HAP-1 (cell line): ENCODE measurements at regions of chr16 and their contacts with region 1.

Region 1: DNA sequence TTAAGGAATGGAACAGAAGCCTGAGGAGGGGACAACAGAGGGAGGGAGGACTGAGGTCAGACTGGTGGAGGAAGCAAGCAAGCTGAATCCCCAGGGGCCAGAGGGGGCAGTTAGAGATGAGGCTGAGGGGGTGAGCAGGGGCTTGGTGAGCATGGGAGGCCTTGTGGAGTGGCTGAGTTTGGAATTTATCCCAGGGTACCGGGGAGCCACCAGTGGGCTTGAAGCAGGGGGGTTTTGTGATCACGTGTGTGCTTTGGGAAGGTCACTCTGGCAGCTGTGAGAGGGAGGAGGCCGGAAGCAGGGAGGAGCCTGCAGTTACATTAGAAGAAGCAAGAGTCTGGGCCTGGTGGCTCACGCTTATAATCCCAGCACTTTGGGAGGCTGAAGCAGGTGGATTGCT is 9.8 kb upstream of the CTCF start:
- DNase-seq: no peak
- H3K4me3 ChIP-seq: no peak overlapping the region
- H3K4me1 ChIP-seq: no peaks in the 10 kb centered on the region
- H3K27me3 ChIP-seq: no peaks in the 10 kb centered on the region

Region 2: GRCh38 chr16:66580605-66581209 is 971.8 kb before region 1 on chr16:
- in situ Hi-C with region 1: no loop called
- DNase-seq: peak; percentile 25 to 66
- H3K4me3 ChIP-seq: no peak overlapping the region
- H3K4me1 ChIP-seq: peaks cover 9% of the 10 kb centered on the region
- H3K27me3 ChIP-seq: no peaks in the 10 kb centered on the region

Region 3: DNA sequence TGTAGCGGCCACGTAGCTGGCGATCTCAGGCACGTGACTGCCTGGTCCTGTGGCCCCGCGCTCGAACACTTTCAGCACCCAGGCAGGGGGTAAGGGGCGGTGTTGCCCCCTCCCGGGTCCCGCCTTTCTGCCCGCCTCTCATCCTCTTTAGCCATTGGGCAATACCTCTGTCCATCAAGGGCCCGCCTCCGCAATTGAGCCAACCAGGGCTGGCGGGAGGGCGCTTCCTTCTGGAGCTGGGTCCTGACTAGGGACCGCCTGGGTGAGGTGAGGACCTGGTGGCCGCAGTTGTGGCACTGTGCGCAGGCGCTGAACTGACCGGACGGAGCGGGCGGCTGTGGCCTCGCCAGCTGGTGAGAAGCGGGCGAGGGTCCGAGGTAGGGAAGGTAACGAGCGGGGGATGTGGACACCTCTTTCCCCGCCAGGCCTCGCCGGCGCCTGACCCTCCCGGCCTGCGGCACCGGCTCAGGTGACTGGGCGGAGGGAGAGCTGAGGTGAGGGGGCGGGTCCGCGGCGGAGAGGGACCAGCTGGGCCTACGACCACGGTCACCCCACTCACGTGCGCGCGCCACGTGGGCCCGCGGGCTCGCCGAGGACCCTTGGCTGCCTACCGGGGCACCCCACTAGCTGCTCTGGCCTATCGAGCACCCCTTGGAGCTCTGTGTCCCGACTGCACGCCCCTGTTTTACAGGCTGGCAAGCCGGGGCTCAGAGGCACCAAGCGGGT is 672.0 kb before region 1 on chr16 and contains the start of gene PDP2:
- in situ Hi-C with region 1: no loop called
- DNase-seq: peak; percentile 93 to 98
- H3K4me3 ChIP-seq: peak within 1 kb of the TSS; percentile 88
- H3K4me1 ChIP-seq: peaks cover 12% of the 10 kb centered on the region
- H3K27me3 ChIP-seq: no peaks in the 10 kb centered on the region

Region 4: GRCh38 chr16:67150833-67151396 is 401.6 kb before region 1 on chr16 and contains the start of gene B3GNT9:
- in situ Hi-C with region 1: no loop called
- DNase-seq: no peak
- H3K4me3 ChIP-seq: no peak within 1 kb of the TSS
- H3K4me1 ChIP-seq: no peaks in the 10 kb centered on the region
- H3K27me3 ChIP-seq: no peaks in the 10 kb centered on the region

Region 5: DNA sequence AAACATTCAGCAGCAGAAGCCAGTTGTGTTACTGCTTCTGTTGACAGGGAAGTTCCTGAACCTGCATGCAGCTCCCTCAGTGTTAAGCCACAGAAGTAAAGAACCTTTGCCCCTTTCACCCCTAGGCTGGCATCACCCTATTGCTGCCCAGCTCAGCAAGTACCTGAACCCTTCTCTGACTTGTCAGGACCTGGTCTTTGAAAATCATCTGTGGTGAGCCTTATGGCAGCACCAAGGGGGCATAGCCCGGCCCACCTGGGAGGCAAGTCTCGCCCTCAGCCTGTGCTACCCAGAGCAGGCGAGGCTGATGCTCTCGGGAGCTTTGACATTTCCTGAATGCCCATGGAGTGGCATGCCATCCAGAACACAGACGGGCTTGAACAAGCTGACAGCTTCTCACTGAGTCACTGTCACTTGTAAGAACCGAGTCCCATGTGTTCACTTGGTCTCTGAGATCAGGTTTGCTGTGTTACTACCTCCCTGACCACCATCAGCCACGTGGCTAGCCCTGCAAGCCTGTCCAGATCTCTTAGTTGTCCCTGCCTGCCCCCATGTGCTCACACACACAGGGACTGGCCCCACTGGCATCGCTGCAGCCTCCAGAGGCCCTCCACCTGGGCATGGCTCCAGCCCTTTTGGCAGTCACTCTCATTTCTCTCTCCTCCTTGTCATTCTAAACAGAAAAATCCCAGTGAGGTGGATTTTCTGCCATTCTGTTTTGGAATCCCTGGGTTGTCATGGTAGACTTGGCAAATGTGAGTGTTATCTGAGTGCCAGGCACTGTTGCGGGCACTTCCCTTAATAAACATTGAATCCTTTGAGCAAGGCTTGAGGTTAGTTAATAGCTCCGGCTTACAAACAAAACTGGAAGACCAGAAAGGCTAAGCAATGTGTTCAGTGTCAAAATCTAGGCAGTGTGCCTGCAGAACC is 89.6 kb after region 1 on chr16:
- in situ Hi-C with region 1: loop called (anchors 5 kb)
- DNase-seq: no peak
- H3K4me3 ChIP-seq: no peak overlapping the region
- H3K4me1 ChIP-seq: peaks cover 5% of the 10 kb centered on the region
- H3K27me3 ChIP-seq: no peaks in the 10 kb centered on the region